RWPE1 (cell line): ENCODE measurements at regions of chr1 and their contacts with region 1.

Region 1: DNA sequence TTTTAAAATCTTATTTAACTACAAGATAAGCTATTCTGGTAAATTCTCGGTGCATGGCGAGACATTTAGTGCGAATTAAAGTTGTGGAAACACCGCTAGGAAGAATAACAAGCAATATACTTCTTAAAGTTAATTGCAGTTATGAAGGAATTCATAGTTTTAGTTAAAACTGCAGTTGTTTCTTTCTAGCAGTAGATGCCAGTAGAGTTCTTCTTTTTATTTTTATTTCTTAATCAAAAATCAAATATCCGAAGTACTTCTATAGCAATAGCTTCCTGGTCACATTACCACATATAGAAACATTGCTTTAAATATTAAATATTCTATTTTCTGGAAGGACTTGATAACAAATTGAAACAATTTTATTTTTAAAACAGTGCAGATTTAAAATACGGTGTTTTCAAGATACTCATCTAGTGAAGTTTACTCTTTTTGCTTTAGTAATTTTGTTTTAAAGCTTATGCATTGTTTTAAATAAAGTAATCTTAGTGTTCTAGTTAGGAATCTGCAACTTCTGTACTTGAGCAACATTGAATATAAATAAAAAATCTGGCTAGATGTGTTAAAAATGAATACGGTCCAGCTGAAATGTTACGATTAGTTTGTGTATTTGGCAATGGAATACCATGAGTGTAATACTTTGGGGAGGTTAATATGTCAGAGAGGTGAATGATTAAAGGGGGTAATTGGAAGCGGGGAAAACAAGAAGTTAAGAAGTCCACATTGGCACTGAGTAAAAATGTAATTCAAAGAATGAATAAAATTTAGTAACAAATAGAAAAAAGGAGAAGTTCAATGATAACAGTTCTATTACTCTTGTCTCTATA is 2.7 kb upstream of the PRKACB start:
- DNase-seq: peak; percentile 7
- H3K27ac ChIP-seq: no peak overlapping the region
- CTCF ChIP-seq: peak; percentile 66

Region 2: DNA sequence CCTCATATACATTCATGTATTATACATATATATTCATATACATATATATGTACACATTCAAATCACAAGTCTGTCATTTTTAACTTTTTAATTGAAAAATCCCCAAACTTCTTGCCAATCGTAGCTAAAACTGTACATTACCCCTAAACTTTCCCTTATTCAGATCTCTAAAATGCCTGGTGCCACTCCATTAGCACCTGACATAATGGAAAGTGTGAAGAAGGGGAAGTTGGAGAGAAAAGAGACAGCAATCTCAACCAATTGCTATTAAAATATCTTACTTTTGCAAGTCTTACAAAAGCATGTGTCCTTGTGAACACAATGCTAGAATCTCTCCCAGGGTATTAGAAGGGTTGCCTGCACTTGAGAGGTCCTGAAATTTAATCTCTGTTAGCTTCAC is 20.0 kb before region 1 on chr1:
- CTCF ChIA-PET with region 1: no interaction called
- POLR2A ChIA-PET with region 1: no interaction called
- DNase-seq: no peak
- H3K27ac ChIP-seq: no peak overlapping the region
- CTCF ChIP-seq: no peak

Region 3: GRCh38 chr1:84433258-84434080 is 292.1 kb after region 1 on chr1:
- CTCF ChIA-PET with region 1: interaction called, 12 read pairs
- POLR2A ChIA-PET with region 1: no interaction called
- DNase-seq: peak; percentile 59
- H3K27ac ChIP-seq: no peak overlapping the region
- CTCF ChIP-seq: peak; percentile 79